PC-9 (cell line): ENCODE measurements at regions of chr3 and their contacts with region 1.

Region 1: GRCh38 chr3:44648564-44649229 is at the start of gene ZNF35:
- DNase-seq: peak; percentile 75 to 80
- H3K4me3 ChIP-seq: peak within 1 kb of the TSS; percentile 98
- H3K27ac ChIP-seq: no peak within 1 kb of the TSS
- H3K4me1 ChIP-seq: 0 out of 2 replicates have a peak, but pooled peaks cover 3% of the 10 kb centered on the region
- H3K27me3 ChIP-seq: no peaks in the 10 kb centered on the region
- CTCF ChIP-seq: no peak
- total RNA-seq, gene ZNF35: 5.4 and 7.0 TPM in 2 replicates

Region 2: GRCh38 chr3:43549626-43550290 is 1098.9 kb before region 1 on chr3:
- CTCF ChIA-PET with region 1: no interaction called
- POLR2A ChIA-PET with region 1: no interaction called
- intact Hi-C with region 1: no loop called
- DNase-seq: no peak
- H3K4me3 ChIP-seq: no peak overlapping the region
- H3K27ac ChIP-seq: no peak overlapping the region
- H3K4me1 ChIP-seq: no peaks in the 10 kb centered on the region
- H3K27me3 ChIP-seq: no peaks in the 10 kb centered on the region
- CTCF ChIP-seq: no peak

Region 3: GRCh38 chr3:44510000-44510368 is 138.7 kb before region 1 on chr3:
- CTCF ChIA-PET with region 1: no interaction called
- POLR2A ChIA-PET with region 1: no interaction called
- intact Hi-C with region 1: loop called (anchors 1 kb)
- DNase-seq: no peak
- H3K4me3 ChIP-seq: peak overlapping the region; percentile 94
- H3K27ac ChIP-seq: no peak overlapping the region
- H3K4me1 ChIP-seq: peaks cover 7% of the 10 kb centered on the region
- H3K27me3 ChIP-seq: no peaks in the 10 kb centered on the region
- CTCF ChIP-seq: no peak

Region 4: GRCh38 chr3:44601749-44602148 is 46.9 kb before region 1 on chr3:
- CTCF ChIA-PET with region 1: interaction called, 15 read pairs
- POLR2A ChIA-PET with region 1: no interaction called
- intact Hi-C with region 1: no loop called
- DNase-seq: no peak
- H3K4me3 ChIP-seq: no peak overlapping the region
- H3K27ac ChIP-seq: no peak overlapping the region
- H3K4me1 ChIP-seq: no peaks in the 10 kb centered on the region
- H3K27me3 ChIP-seq: peaks cover 14% of the 10 kb centered on the region; the same call in 1 of the 2 replicates
- CTCF ChIP-seq: no peak

Region 5: DNA sequence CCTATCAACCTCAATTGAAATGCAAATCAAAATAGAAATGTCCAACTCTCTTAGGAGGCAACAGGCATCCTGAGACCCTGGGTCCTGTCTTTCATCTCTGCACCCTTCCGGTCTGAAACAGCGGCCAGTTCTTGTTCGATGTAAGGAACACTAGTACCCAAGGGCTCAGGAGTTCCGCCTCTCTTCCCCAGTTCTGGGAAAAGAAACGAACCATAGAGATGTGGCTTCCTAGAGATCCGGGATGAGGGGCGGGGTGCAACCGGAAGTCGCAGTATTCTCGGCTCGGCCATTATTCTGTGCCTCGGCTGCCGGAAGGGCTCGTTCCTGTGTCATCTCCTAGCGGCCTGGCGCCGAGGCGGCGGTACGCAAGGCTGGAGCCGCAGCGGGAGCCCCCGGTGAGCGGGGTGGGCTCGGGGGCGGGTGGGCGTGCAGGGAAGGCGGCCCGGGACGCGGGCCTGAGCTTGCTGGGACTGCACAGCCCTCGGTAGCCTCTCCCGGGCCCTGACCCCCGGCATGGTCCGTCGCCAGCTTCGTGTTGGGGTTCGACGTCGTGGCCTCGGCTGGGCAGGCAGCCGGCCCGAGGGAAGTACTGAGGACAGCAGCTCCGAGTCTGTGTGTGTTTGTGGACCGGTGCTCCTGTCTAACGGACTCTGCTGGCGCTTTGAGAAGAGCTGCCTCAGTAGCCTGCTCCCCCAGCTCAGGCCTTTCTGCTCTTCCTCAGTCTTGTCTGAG is 23.8 kb before region 1 on chr3 and contains the start of gene ZNF197:
- CTCF ChIA-PET with region 1: no interaction called
- POLR2A ChIA-PET with region 1: no interaction called
- intact Hi-C with region 1: loop called (anchors 1 kb)
- DNase-seq: peak; percentile 67 to 74
- H3K4me3 ChIP-seq: peak within 1 kb of the TSS; percentile 65
- H3K27ac ChIP-seq: no peak within 1 kb of the TSS
- H3K4me1 ChIP-seq: no peaks in the 10 kb centered on the region; the same call in 1 of the 2 replicates
- H3K27me3 ChIP-seq: no peaks in the 10 kb centered on the region
- CTCF ChIP-seq: no peak
- total RNA-seq, gene ZNF197: 7.4 and 9.5 TPM in 2 replicates

Region 6: DNA sequence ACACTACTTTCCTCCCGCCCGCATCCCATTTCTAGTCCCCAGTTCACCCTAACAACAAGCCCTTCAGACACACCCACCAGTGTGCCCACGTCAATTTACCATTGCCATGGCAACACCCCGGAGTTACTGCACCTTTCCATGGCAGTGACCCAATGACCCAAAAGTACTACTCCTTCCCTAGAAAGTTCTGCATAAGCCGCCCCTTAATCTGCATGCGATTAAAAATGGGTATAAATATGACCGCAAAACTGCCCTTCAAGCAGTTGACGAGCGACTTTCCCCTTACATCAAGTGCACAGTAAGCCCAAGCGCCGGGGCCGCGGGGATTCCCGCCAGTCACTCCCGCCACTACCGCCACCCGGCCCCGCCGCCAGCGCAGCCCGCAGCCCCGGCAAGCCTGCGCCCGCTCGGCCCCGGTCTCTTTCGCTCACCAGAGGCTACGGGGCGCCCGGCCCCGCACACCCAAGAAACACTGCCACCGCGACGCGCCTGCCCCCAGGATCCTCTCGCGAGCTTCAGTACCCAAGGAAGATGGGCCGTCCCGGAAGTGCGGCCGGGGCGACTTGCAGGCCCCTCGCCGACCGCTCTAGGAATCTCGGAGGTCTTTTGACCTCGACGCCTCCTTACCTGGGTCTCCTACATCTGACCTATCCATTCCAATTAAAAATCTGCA is 36.6 kb after region 1 on chr3:
- CTCF ChIA-PET with region 1: no interaction called
- POLR2A ChIA-PET with region 1: no interaction called
- intact Hi-C with region 1: loop called (anchors 1 kb)
- DNase-seq: peak; percentile 57 to 72
- H3K4me3 ChIP-seq: peak overlapping the region; percentile 51
- H3K27ac ChIP-seq: no peak overlapping the region
- H3K4me1 ChIP-seq: no peaks in the 10 kb centered on the region
- H3K27me3 ChIP-seq: peaks cover 3% of the 10 kb centered on the region; the same call in 1 of the 2 replicates
- CTCF ChIP-seq: no peak

Region 7: DNA sequence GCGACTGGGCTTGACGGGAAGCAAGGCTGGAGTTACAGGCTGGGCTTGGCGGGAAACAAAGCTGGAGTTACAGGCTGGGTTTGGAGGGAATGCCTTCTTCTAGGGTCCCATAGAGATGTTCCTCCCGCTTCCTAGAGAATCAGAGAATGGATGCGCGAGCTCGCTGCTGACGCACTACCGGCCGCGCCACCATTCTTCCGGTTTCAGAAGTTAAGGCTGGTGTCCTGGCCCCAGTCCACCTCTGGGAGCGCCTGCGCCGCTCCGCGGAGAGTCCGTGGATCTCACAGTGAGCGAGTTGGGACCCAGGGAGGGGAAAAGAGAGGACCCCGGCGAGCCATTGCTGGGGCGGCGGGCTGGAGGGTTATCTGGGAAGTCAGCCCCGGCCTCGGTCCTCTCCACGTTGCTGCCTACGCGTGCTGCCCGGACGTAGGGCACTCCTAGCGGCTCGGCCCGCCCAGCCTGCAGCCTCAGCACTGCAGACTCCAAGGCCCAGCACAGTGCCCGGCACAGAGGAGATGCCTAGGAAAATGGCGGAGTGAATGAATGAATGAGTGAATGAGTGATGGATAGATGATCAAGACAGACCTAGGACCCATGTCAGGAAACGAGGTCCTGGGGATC is 63.9 kb after region 1 on chr3 and contains the start of gene ZNF502:
- CTCF ChIA-PET with region 1: no interaction called
- POLR2A ChIA-PET with region 1: no interaction called
- intact Hi-C with region 1: loop called (anchors 2 kb)
- DNase-seq: peak; percentile 69 to 71
- H3K4me3 ChIP-seq: peak within 1 kb of the TSS; percentile 94
- H3K27ac ChIP-seq: no peak within 1 kb of the TSS
- H3K4me1 ChIP-seq: no peaks in the 10 kb centered on the region
- H3K27me3 ChIP-seq: peaks cover 35% of the 10 kb centered on the region
- CTCF ChIP-seq: 0 out of 2 replicates have a peak, but pooled peaks have one; percentile 29
- total RNA-seq, gene ZNF502: 2.1 and 2.8 TPM in 2 replicates

Region 8: DNA sequence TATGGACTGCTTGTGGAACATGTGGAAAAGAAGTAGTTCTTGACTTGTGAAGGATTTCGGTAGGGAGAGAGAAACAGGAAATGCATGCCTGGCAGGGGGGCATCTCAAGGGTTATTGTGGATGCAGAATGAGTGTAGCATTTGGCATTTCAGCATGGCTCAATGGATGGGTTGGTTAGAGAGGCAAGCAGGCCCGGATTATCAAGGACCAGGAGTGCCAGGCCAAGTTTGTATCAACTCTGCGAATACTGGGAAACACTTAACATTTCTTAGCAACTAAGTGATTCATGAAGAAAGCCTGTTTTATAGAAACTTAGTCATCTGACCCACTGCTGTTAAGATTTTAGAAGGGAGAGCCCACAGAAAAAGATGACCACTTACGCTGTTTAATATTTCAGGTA is 146.5 kb after region 1 on chr3:
- CTCF ChIA-PET with region 1: no interaction called
- POLR2A ChIA-PET with region 1: interaction called, 16 read pairs
- intact Hi-C with region 1: no loop called
- DNase-seq: no peak
- H3K4me3 ChIP-seq: no peak overlapping the region
- H3K27ac ChIP-seq: no peak overlapping the region
- H3K4me1 ChIP-seq: no peaks in the 10 kb centered on the region
- H3K27me3 ChIP-seq: no peaks in the 10 kb centered on the region
- CTCF ChIP-seq: no peak

Region 9: DNA sequence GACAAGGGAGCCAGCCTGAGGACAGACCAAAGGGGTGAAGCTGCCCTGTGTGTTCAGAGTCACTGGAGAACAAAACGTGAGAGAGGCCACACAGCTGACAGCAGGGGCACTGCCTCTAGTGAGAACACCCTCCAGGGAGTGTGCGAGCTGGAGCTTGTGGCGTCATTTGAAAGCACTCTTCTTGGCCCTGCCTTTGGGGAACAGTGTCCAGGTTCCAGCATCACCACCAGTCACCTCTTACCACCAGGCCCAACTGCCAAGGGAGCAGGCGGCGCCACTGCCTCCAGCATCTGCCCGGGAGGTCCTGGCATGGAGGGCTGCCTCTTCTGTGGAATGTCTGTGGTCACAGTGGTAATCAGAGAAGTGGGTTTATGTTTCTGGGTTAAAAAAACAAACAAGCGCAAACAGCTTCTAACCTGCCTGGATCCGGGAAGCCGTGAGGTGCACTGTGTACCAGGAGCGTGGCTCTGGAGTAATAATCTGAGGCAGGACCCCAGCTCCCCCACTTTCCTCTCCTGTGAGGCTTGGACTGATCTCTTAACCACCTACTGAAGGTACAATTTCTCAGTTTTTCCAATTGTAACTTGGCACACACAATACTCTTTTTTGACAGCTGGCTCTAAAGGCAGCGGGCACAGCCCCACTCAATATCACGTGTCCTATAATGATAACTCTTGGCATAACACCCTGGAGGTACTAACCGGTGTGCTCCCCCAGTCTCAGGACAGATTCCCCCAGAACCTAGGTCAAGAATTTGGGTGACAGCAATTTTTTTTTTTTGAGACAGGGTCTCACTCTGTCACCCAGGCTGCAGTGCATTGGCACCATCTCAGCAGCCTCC is 529.7 kb after region 1 on chr3:
- CTCF ChIA-PET with region 1: no interaction called
- POLR2A ChIA-PET with region 1: no interaction called
- intact Hi-C with region 1: no loop called
- DNase-seq: peak; percentile 38 to 44
- H3K4me3 ChIP-seq: no peak overlapping the region
- H3K27ac ChIP-seq: no peak overlapping the region
- H3K4me1 ChIP-seq: peaks cover 25% of the 10 kb centered on the region
- H3K27me3 ChIP-seq: no peaks in the 10 kb centered on the region
- CTCF ChIP-seq: no peak